Activated CD4-positive, alpha-beta T cell treated with anti-CD3 and anti-CD28 coated beads, Interleukin-2, amount 10 ng/mL, durations not matched to agents 24 days and 14 days (primary cell): ENCODE measurements at regions of chr6 and their contacts with region 1.

Region 1: GRCh38 chr6:139028658-139029469 is at the start of gene ABRACL:
- DNase-seq: peak; percentile 94
- H3K4me3 Mint-ChIP-seq: no peak within 1 kb of the TSS
- H3K27ac Mint-ChIP-seq: peak within 1 kb of the TSS; percentile 85
- H3K4me1 Mint-ChIP-seq: peaks cover 21% of the 10 kb centered on the region
- H3K27me3 Mint-ChIP-seq: no peaks in the 10 kb centered on the region
- total RNA-seq, gene ABRACL: 131 and 134 TPM in 2 replicates

Region 2: DNA sequence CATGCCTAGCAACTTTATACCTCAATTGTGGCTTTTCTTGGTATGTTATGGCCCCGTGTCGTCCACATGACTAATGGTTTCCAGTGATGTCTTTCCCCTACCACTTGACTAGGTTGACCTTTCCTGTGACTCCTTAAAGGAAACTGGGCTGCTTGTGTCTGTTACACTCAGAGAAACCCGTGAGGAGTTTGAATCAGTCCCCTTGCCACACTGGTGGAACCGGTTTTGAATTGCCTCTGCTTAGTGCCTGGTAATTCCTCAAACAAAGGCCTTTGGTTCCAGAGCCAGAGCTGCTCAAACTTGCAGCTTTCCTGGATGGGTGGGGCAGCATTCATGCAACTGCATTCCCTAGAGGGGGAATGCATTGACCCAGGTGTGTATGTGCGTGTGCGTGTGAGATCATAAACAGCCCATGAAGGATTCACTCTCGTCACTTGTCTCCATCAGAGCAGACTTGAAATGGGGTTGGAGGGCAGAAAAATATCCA is 211.0 kb before region 1 on chr6:
- intact Hi-C with region 1: loop called (anchors 2 kb)
- DNase-seq: no peak
- H3K4me3 Mint-ChIP-seq: peak overlapping the region; percentile 45
- H3K27ac Mint-ChIP-seq: peak overlapping the region; percentile 79
- H3K4me1 Mint-ChIP-seq: peaks cover 29% of the 10 kb centered on the region
- H3K27me3 Mint-ChIP-seq: peaks cover 2% of the 10 kb centered on the region

Region 3: GRCh38 chr6:138987640-138988468 is 41.0 kb before region 1 on chr6 and contains the start of gene REPS1:
- intact Hi-C with region 1: loop called (anchors 1 kb)
- DNase-seq: peak; percentile 98
- H3K4me3 Mint-ChIP-seq: peak within 1 kb of the TSS; percentile 91
- H3K27ac Mint-ChIP-seq: peak within 1 kb of the TSS; percentile 97
- H3K4me1 Mint-ChIP-seq: peaks cover 19% of the 10 kb centered on the region
- H3K27me3 Mint-ChIP-seq: peaks cover under 1% of the 10 kb centered on the region
- total RNA-seq, gene REPS1: 65.8 and 70.1 TPM in 2 replicates

Region 4: GRCh38 chr6:139134817-139135581 is 106.1 kb after region 1 on chr6 and contains the start of gene HECA:
- intact Hi-C with region 1: loop called (anchors 1 kb)
- DNase-seq: peak; percentile 100
- H3K4me3 Mint-ChIP-seq: peak within 1 kb of the TSS; percentile 98
- H3K27ac Mint-ChIP-seq: peak within 1 kb of the TSS; percentile 97
- H3K4me1 Mint-ChIP-seq: peaks cover 60% of the 10 kb centered on the region
- H3K27me3 Mint-ChIP-seq: no peaks in the 10 kb centered on the region
- total RNA-seq, gene HECA: 45.7 and 47.7 TPM in 2 replicates

Region 5: GRCh38 chr6:139240161-139241010 is 211.5 kb after region 1 on chr6:
- intact Hi-C with region 1: loop called (anchors 10 kb)
- DNase-seq: peak; percentile 21
- H3K4me3 Mint-ChIP-seq: no peak overlapping the region
- H3K27ac Mint-ChIP-seq: no peak overlapping the region
- H3K4me1 Mint-ChIP-seq: peaks cover 6% of the 10 kb centered on the region
- H3K27me3 Mint-ChIP-seq: no peaks in the 10 kb centered on the region